ENCODE measurements at regions of chr11 and their contacts with region 1.

Region 1: GRCh38 chr11:112440518-112440917 is 179.9 kb upstream of the PLET1 start:
- DNase-seq: peak in 1 of 2 experiments; percentile 38
- H3K4me3 ChIP-seq: no peak overlapping the region
- H3K4me3 Mint-ChIP-seq: no peak overlapping the region
- H3K27ac Mint-ChIP-seq: no peak overlapping the region
- H3K4me1 ChIP-seq: no peaks in the 10 kb centered on the region
- H3K4me1 Mint-ChIP-seq: no peaks in the 10 kb centered on the region
- H3K27me3 ChIP-seq: no peaks in the 10 kb centered on the region
- H3K27me3 Mint-ChIP-seq: peaks cover 25% of the 10 kb centered on the region
- CTCF ChIP-seq: peak; percentile 49 to 83

Region 2: DNA sequence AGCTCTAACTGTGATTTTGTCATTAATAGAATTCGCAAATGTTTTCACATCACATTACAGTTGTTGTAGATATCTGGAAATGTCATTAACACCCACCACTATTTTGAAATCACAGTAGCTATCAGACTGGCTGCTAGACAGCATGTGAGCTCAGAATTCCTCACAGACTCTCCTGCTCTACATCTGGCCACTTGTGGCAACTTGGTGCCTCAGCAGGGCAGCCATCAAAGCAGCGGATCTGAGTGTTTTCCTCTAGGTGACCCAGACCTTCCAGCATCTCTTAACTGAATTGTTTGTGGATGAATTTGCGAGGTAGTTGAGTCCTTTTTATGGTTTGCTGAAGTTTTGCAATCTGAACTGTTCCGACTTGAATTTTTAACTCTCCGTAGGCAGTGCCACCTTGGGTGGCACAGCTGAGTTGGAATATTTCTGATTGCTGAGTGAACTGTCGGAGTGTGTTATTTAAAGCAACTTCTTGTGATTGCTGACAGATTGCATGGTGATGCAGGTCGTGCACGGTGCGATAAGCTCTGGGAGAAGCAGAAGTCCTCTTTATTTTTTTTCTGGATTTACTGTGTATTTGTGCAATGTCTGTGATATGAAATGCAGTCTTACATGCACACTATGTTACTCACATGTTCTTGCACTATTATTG is 65.9 kb before region 1 on chr11:
- CTCF ChIA-PET with region 1: no interaction called
- POLR2A ChIA-PET with region 1: no interaction called
- intact Hi-C with region 1: no loop called
- DNase-seq: no peak
- H3K4me3 ChIP-seq: no peak overlapping the region
- H3K4me3 Mint-ChIP-seq: no peak overlapping the region
- H3K27ac Mint-ChIP-seq: no peak overlapping the region
- H3K4me1 ChIP-seq: no peaks in the 10 kb centered on the region
- H3K4me1 Mint-ChIP-seq: no peaks in the 10 kb centered on the region
- H3K27me3 ChIP-seq: no peaks in the 10 kb centered on the region
- H3K27me3 Mint-ChIP-seq: peaks cover 10% of the 10 kb centered on the region
- CTCF ChIP-seq: no peak

Region 3: DNA sequence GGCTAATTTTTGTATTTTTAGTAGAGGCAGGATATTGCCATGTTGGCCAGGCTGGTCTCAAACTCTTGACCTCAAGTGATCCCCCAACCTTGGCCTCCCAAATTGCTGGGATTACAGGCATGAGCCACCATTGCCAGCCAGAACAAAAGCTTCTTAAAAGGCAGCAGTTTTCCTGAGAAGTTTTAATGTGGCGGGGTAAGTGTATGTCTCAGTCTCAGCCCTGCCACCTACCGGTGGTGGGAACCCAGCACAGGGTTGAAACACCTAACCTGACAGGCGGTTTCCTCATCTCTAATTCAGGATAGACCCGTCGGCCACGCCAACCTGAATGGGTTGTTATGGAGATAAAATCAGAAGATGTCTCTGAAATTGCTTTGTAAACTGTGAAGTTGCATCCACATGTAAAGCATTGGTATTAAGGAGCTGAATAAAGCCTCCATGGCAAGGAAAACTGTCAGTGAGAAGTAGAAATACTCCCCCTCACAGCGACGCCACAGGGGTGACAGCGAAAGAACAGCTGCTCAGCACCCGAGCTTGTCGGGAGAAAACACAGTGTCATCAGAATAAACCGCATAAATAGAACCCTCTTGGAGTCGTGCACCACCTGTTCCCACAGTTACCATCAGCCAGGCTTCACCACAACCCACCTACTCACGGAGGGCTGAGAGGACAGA is 354.8 kb after region 1 on chr11:
- CTCF ChIA-PET with region 1: no interaction called
- POLR2A ChIA-PET with region 1: no interaction called
- intact Hi-C with region 1: loop called (anchors 1 kb)
- DNase-seq: peak; percentile 66 to 76
- H3K4me3 ChIP-seq: no peak overlapping the region
- H3K4me3 Mint-ChIP-seq: no peak overlapping the region
- H3K27ac Mint-ChIP-seq: no peak overlapping the region
- H3K4me1 ChIP-seq: no peaks in the 10 kb centered on the region
- H3K4me1 Mint-ChIP-seq: no peaks in the 10 kb centered on the region
- H3K27me3 ChIP-seq: peaks cover 2% of the 10 kb centered on the region
- H3K27me3 Mint-ChIP-seq: peaks cover 19% of the 10 kb centered on the region
- CTCF ChIP-seq: peak; percentile 89

Measured in Caco-2 (cell line).